ENCODE measurements at regions of chr2 and their contacts with region 1.

Region 1: GRCh38 chr2:7440977-7441376 is 523.8 kb downstream of the RNF144A start:
- DNase-seq: no peak
- H3K4me3 ChIP-seq: no peak overlapping the region
- H3K27ac ChIP-seq: no peak overlapping the region
- H3K4me1 ChIP-seq: no peaks in the 10 kb centered on the region
- H3K27me3 ChIP-seq: no peaks in the 10 kb centered on the region

Region 2: DNA sequence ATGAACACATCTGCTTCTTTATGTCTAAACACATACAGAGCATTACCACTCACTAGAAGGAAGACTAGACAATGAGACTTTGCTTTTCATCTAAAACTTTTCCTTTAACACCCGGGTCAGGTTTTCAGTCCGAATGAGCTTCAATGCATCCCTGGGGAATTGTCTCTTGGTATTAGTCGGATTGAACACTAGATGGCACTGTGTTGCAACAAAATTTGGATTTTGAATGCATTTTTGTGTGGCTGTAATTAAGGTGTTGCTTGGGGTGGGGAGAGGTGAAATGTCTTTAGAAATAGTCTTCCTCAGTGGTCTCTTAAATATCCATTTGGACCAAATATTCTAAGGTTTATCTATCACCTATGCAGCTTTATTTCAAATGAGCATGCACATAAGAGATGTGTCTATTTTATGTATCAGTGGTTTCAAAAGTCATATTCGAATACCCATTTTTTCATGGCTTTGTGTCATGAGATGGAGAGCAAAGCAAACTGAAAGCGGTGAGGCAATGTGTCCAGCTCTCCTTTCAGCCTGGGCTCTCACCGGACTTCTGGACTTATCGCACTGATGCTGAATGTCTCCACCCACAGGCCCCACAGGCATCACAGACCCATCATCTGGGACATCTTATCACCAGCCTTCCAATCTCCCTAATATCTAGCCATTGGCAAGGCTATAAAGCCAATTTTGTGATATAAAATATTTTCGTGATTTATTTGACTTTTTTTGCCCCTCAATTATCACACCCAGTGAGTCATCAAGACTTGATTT is 13.5 kb before region 1 on chr2:
- CTCF ChIA-PET with region 1: interaction called, 10 read pairs
- POLR2A ChIA-PET with region 1: no interaction called
- DNase-seq: peak; percentile 52 to 70 (median 64)
- H3K4me3 ChIP-seq: no peak overlapping the region
- H3K27ac ChIP-seq: no peak overlapping the region
- H3K4me1 ChIP-seq: peaks cover 13 to 29% (median 22%) of the 10 kb centered on the region in 4 experiments
- H3K27me3 ChIP-seq: no peaks in the 10 kb centered on the region

Measured in common myeloid progenitor, CD34-positive (primary cell).